Dorsolateral prefrontal cortex (tissue), 120 donors: ENCODE measurements at regions of chr11 and their contacts with region 1.

Region 1: DNA sequence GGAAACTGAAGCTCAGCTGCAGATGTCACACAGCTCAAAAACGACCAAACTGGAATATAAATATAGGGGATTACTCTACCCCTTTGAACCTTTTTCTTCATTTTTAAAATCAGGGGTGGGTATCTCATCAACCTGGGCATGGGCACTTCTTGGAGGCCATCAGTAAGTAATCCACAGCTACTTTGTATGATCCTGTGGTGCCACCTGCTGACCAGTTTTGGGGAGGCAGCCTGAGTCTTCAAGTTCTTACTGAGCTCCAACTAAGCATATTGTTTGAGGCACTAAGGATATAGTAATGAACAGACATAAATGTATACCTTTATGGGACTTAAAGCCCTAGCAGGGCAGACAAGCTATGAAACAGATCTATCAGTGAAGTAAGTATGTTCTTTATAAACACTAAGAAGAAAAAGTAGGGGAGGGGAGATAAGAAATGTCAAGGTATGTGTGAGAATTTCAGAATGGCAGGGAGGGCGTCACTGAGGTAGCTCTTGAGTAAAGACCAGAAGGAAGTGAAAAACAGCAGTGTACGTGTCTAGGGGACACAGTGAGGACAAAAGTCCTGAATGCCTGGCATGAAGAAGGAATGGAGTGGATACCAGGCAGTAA is 18.4 kb downstream of the TUB start:
- DNase-seq: peak; percentile 71 to 95 (median 81)
- H3K4me3 ChIP-seq: no peak overlapping the region
- H3K27ac ChIP-seq: peak overlapping the region in 21 of 59 donors; percentile 4 to 76 (median 32)
- H3K27me3 ChIP-seq: no peaks in the 10 kb centered on the region
- CTCF ChIP-seq: peak; percentile 49 to 93 (median 83)

Region 2: DNA sequence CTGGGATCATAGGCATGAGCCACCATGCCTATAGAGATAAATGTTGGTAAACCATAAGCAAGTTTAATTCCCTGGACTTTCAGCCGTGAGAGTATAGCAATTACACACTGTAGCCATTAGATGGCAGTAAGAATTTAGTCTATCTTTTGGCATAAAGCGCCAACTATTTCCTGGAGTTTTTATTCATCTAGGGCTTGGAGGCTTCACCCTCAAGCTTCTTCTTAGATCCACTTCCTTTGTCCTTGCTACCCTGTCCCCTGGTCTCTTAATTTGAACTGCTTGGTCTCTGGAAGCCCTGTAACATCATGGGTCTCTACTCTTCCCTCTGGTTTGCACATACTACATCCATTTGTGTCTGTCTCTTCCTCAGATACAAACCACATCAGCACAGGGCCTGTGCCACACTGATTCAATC is 206.5 kb before region 1 on chr11:
- intact Hi-C with region 1: loop called (anchors 2 to 10 kb)
- DNase-seq: no peak
- H3K4me3 ChIP-seq: no peak overlapping the region
- H3K27ac ChIP-seq: peak overlapping the region in 1 of 59 donors; percentile 46
- H3K27me3 ChIP-seq: no peaks in the 10 kb centered on the region
- CTCF ChIP-seq: peak; percentile 41 to 86 (median 72)

Region 3: DNA sequence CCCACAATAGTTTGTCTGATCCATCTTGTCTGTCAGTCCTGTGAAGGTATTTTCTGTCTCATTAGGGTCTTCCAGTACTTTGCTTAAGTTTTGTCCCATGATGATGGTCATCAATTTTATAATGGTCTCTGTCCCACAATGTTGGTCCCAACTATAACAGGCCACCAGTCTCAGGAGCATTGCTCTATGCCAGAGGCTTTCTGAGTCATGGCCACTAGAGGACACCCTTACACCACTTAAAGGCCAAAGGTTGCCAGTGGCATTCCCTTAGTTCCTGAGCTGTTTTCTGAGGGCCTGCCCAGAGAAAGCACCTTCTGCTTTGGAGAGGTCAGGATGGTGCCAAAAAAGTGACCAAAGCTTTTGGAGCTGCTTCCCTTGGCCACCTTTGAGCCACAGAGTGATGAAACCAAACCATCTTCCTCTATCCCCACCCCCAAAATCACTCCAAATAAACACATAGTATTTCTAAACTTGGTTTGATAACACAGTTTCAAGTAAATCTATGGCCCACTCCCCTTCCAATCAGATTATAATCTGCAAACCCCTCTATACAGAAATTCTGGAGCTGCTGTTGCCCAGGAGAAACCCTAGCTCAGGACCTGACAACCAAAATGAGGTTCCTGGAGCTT is 92.9 kb before region 1 on chr11:
- intact Hi-C with region 1: loop called (anchors 2 to 5 kb)
- DNase-seq: peak in 8 of 10 donors; percentile 30 to 73 (median 54)
- H3K4me3 ChIP-seq: no peak overlapping the region
- H3K27ac ChIP-seq: no peak overlapping the region
- H3K27me3 ChIP-seq: no peaks in the 10 kb centered on the region
- CTCF ChIP-seq: peak; percentile 30 to 94 (median 79)

Region 4: DNA sequence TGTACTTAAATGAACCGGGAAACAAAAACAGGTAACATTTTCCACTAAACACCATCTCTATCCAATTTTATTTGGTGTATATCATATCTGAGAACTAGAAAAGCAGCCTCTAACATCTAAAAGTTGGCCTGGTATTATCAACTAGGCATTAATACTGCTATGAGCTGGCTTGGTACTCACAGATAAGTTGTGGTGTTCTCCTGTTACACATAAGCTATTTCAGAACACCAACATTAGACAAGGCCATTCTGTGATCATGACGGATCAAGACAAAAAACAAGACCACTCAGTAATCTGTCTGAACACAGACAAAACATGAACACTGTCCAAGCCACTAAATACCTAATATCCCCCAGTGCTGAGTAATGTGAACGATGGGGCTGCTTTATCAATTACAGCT is 57.5 kb after region 1 on chr11:
- intact Hi-C with region 1: no loop called
- DNase-seq: no peak
- H3K4me3 ChIP-seq: no peak overlapping the region
- H3K27ac ChIP-seq: no peak overlapping the region
- H3K27me3 ChIP-seq: no peaks in the 10 kb centered on the region
- CTCF ChIP-seq: no peak